RWPE1 (cell line): ENCODE measurements at regions of chr19 and their contacts with region 1.

Region 1: DNA sequence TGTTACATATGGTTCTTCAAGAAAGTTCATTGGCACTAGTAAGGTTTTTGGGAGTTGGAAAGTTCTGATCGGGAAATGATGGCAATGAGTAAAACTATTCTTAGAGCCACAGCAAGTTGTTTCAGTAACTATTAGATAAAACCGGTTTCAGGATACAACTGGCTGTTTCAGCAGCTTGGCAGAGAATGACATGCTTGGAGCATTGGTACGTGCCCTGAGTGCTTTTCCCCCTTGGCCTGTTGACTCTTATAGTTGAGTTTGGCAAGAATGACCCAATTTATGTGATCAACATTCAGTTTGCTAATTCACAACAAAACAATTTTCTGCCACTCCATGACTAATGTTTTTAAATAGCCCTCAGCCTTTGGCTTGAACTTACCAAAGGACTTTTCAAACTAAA is 10.8 kb upstream of the ZNF491 start:
- DNase-seq: no peak
- H3K27ac ChIP-seq: no peak overlapping the region
- CTCF ChIP-seq: no peak

Region 2: GRCh38 chr19:11856596-11857250 is 69.2 kb after region 1 on chr19:
- CTCF ChIA-PET with region 1: no interaction called
- POLR2A ChIA-PET with region 1: no interaction called
- DNase-seq: no peak
- H3K27ac ChIP-seq: no peak overlapping the region
- CTCF ChIP-seq: no peak

Region 3: GRCh38 chr19:12145348-12145747 is 357.8 kb after region 1 on chr19:
- CTCF ChIA-PET with region 1: no interaction called
- POLR2A ChIA-PET with region 1: interaction called, 14 read pairs
- DNase-seq: no peak
- H3K27ac ChIP-seq: no peak overlapping the region
- CTCF ChIP-seq: no peak